ENCODE measurements at regions of chr10 and their contacts with region 1.

Region 1: DNA sequence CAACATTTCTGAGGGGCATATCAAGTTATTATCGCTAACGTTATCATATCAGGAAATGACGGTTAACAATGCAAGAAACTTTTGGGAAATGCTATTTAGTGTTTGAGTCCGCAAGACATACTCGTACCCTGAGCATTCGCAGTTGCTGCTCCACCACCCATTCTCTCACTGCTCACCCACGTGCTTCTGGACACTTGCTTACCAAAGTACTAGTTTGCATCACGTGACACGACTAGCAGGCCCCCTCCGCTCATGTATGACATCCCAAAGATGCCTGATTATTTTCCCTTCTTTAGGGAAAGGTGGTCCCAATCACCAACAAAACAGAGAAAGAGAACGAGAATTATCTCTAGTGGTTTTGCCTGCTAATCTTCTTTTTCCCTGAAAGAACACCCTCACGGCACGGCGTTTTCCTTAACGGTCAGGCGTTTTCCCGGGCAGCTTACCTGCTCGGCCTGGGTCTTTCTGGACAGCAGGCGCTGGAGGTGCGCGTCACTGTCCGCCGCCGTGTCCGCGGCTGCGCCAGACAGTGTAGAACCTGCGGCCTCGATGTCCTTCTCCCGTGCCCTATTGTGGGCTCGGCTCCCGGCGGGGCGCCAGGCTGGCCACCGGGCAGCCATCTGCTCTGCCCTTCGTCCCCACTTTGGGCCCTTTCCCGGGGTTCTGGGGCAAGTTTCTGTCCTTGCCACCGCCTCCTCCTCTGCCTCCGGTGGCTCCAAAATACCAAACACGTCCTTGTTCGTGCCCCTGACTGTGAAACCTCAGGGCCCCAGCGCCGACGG is at the start of gene SUPV3L1:
- DNase-seq: peak; percentile 75 to 95 (median 81)
- ATAC-seq: peak; percentile 69
- H3K4me3 ChIP-seq: peak within 1 kb of the TSS; percentile 83
- H3K4me3 Mint-ChIP-seq: peak within 1 kb of the TSS; percentile 98
- H3K27ac ChIP-seq: peak within 1 kb of the TSS; percentile 94 to 95
- H3K27ac Mint-ChIP-seq: peak within 1 kb of the TSS; percentile 100
- H3K4me1 ChIP-seq: peaks cover 21% of the 10 kb centered on the region
- H3K4me1 Mint-ChIP-seq: peaks cover 50% of the 10 kb centered on the region
- H3K27me3 ChIP-seq: no peaks in the 10 kb centered on the region
- H3K27me3 Mint-ChIP-seq: no peaks in the 10 kb centered on the region
- CTCF ChIP-seq: no peak
- total RNA-seq, gene SUPV3L1: 78.1 to 78.7 TPM

Region 2: GRCh38 chr10:68271196-68271882 is 908.6 kb before region 1 on chr10:
- CTCF ChIA-PET with region 1: no interaction called
- POLR2A ChIA-PET with region 1: no interaction called
- intact Hi-C with region 1: no loop called
- DNase-seq: no peak
- ATAC-seq: no peak
- H3K4me3 ChIP-seq: no peak overlapping the region
- H3K4me3 Mint-ChIP-seq: no peak overlapping the region
- H3K27ac ChIP-seq: no peak overlapping the region
- H3K27ac Mint-ChIP-seq: no peak overlapping the region
- H3K4me1 ChIP-seq: no peaks in the 10 kb centered on the region
- H3K4me1 Mint-ChIP-seq: no peaks in the 10 kb centered on the region
- H3K27me3 ChIP-seq: no peaks in the 10 kb centered on the region
- H3K27me3 Mint-ChIP-seq: peaks cover 5% of the 10 kb centered on the region
- CTCF ChIP-seq: no peak

Region 3: GRCh38 chr10:68720793-68721672 is 458.9 kb before region 1 on chr10 and contains the start of gene CCAR1:
- CTCF ChIA-PET with region 1: no interaction called
- POLR2A ChIA-PET with region 1: no interaction called
- intact Hi-C with region 1: loop called in 1 of 2 experiments (anchors 10 kb)
- DNase-seq: peak; percentile 92 to 99 (median 96)
- ATAC-seq: peak; percentile 94
- H3K4me3 ChIP-seq: peak within 1 kb of the TSS; percentile 93
- H3K4me3 Mint-ChIP-seq: peak within 1 kb of the TSS; percentile 100
- H3K27ac ChIP-seq: peak within 1 kb of the TSS; percentile 85 to 89
- H3K27ac Mint-ChIP-seq: peak within 1 kb of the TSS; percentile 98
- H3K4me1 ChIP-seq: peaks cover 16% of the 10 kb centered on the region
- H3K4me1 Mint-ChIP-seq: peaks cover 16% of the 10 kb centered on the region
- H3K27me3 ChIP-seq: no peaks in the 10 kb centered on the region
- H3K27me3 Mint-ChIP-seq: no peaks in the 10 kb centered on the region
- CTCF ChIP-seq: no peak
- total RNA-seq, gene CCAR1: 68.9 to 82.2 TPM

Region 4: DNA sequence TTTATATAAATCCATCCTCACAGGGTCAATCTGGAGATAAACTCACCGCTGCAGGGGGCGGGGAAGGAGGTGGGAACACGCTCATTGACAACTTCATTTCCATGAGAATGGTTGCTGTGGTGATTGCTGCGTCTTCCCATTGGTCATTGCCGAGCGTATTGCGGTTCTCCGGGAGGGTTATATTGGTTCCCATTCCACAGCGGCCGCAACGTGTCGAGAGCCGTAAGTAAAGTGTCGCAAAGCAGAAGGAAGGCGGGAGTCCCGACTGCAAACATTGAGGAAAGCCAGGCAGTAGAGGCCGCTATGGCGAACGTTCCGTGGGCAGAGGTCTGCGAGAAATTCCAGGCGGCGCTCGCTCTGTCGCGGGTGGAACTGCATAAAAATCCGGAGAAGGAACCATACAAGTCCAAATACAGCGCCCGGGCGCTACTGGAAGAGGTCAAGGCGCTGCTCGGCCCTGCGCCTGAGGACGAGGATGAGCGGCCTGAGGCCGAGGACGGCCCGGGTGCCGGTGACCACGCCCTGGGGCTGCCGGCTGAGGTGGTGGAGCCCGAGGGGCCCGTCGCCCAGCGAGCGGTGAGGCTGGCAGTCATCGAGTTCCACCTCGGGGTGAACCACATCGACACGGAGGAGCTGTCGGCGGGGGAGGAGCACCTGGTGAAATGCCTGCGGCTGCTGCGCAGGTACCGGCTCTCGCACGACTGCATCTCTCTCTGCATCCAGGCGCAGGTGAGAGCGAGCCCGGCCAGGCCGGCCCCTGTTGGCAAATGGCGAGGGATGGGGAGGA is 191.2 kb before region 1 on chr10 and contains the start of gene KIFBP:
- CTCF ChIA-PET with region 1: no interaction called
- POLR2A ChIA-PET with region 1: no interaction called
- intact Hi-C with region 1: loop called in 1 of 2 experiments (anchors 5 kb)
- DNase-seq: peak; percentile 60 to 95 (median 74)
- ATAC-seq: peak; percentile 81
- H3K4me3 ChIP-seq: peak within 1 kb of the TSS; percentile 90
- H3K4me3 Mint-ChIP-seq: peak within 1 kb of the TSS; percentile 98
- H3K27ac ChIP-seq: peak within 1 kb of the TSS; percentile 55 to 69
- H3K27ac Mint-ChIP-seq: peak within 1 kb of the TSS; percentile 88
- H3K4me1 ChIP-seq: peaks cover 39% of the 10 kb centered on the region
- H3K4me1 Mint-ChIP-seq: peaks cover 58% of the 10 kb centered on the region
- H3K27me3 ChIP-seq: no peaks in the 10 kb centered on the region
- H3K27me3 Mint-ChIP-seq: no peaks in the 10 kb centered on the region
- CTCF ChIP-seq: peak; percentile 43
- total RNA-seq, gene KIFBP: 4.2 TPM

Region 5: DNA sequence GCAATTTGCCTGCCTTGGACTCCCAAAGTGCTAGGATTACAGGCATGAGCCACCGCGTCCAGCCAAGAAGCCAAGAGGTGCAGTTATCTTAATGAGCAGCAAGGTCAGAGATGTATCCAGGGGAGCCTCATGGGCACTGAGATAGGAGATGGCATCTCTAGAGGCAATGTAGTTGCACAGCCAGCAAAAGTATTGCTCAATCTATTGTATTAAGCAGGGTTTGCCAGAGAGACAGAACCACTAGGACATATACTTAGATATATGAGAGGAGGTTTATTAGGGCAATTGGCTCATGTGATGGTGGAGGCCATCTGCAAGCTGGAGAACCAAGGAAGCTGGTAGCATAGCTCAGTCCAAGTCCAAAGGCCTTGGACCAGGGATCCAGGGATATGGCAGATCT is 72.2 kb before region 1 on chr10:
- CTCF ChIA-PET with region 1: no interaction called
- POLR2A ChIA-PET with region 1: no interaction called
- intact Hi-C with region 1: no loop called
- DNase-seq: no peak
- ATAC-seq: no peak
- H3K4me3 ChIP-seq: no peak overlapping the region
- H3K4me3 Mint-ChIP-seq: no peak overlapping the region
- H3K27ac ChIP-seq: no peak overlapping the region
- H3K27ac Mint-ChIP-seq: no peak overlapping the region
- H3K4me1 ChIP-seq: no peaks in the 10 kb centered on the region
- H3K4me1 Mint-ChIP-seq: peaks cover under 1% of the 10 kb centered on the region
- H3K27me3 ChIP-seq: no peaks in the 10 kb centered on the region
- H3K27me3 Mint-ChIP-seq: no peaks in the 10 kb centered on the region
- CTCF ChIP-seq: no peak

Region 6: GRCh38 chr10:69123747-69124562 is 56.0 kb before region 1 on chr10 and contains the start of gene VPS26A:
- CTCF ChIA-PET with region 1: interaction called, 3 read pairs
- POLR2A ChIA-PET with region 1: interaction called, 11 read pairs
- intact Hi-C with region 1: loop called (anchors 1 to 2 kb)
- DNase-seq: peak; percentile 97 to 99 (median 98)
- ATAC-seq: peak; percentile 94
- H3K4me3 ChIP-seq: peak within 1 kb of the TSS; percentile 90
- H3K4me3 Mint-ChIP-seq: peak within 1 kb of the TSS; percentile 97
- H3K27ac ChIP-seq: peak within 1 kb of the TSS; percentile 92 to 95
- H3K27ac Mint-ChIP-seq: peak within 1 kb of the TSS; percentile 98
- H3K4me1 ChIP-seq: peaks cover 35% of the 10 kb centered on the region
- H3K4me1 Mint-ChIP-seq: peaks cover 27% of the 10 kb centered on the region
- H3K27me3 ChIP-seq: no peaks in the 10 kb centered on the region
- H3K27me3 Mint-ChIP-seq: no peaks in the 10 kb centered on the region
- CTCF ChIP-seq: peak; percentile 48
- total RNA-seq, gene VPS26A: 32.8 to 33.0 TPM

Region 7: DNA sequence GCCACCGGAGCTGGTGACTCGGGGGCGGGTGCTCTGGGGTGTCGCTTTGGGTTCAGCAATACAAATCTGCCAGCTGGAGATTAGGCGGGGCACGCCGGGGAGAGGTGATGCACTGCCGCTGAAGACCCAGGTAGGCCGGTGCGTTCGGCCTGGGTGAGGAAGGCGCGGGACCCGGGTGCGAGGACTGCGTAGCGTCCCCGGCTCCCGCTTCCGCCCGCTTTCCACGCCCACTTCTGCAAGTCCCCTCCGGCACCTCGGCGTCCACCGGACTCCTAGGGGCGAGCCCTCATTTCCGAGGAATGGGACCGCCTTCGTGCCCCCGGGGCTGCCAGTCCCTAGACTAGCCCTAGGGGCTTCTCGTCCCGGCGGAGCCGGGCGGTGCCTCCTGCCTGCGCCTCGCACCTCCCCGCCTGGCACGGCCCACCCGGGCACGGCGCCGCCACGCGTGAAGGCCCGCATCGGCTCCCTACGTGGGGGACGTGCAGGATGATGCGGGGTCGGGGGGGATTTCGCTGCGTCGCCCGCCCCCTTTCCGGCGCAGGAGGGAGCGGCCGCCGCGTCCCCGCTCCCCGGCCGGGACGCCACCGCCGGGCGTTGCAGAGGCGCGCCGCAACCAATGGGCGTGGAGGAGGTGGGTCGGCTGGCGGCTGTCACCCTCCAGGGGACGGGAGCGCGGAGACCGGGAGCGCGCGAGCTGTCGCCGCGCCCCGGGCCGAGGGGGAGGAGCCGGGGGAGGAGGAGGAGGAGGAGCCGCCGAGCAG is 138.4 kb after region 1 on chr10:
- CTCF ChIA-PET with region 1: no interaction called
- POLR2A ChIA-PET with region 1: interaction called, 6 read pairs
- intact Hi-C with region 1: loop called in 1 of 2 experiments (anchors 5 kb)
- DNase-seq: peak; percentile 83 to 96 (median 90)
- ATAC-seq: peak; percentile 90
- H3K4me3 ChIP-seq: peak overlapping the region; percentile 80
- H3K4me3 Mint-ChIP-seq: peak overlapping the region; percentile 98
- H3K27ac ChIP-seq: peak overlapping the region; percentile 86 to 93
- H3K27ac Mint-ChIP-seq: peak overlapping the region; percentile 95
- H3K4me1 ChIP-seq: peaks cover 45% of the 10 kb centered on the region
- H3K4me1 Mint-ChIP-seq: peaks cover 42% of the 10 kb centered on the region
- H3K27me3 ChIP-seq: no peaks in the 10 kb centered on the region
- H3K27me3 Mint-ChIP-seq: no peaks in the 10 kb centered on the region
- CTCF ChIP-seq: no peak